ENCODE measurements at regions of chr19 and their contacts with region 1.

Region 1: GRCh38 chr19:10998045-10998533 is 37.3 kb downstream of the SMARCA4 start:
- DNase-seq: no peak
- ATAC-seq: no peak
- H3K4me3 ChIP-seq: no peak overlapping the region
- H3K4me3 Mint-ChIP-seq: no peak overlapping the region
- H3K27ac ChIP-seq: no peak overlapping the region
- H3K27ac Mint-ChIP-seq: no peak overlapping the region
- H3K4me1 ChIP-seq: no peaks in the 10 kb centered on the region
- H3K4me1 Mint-ChIP-seq: no peaks in the 10 kb centered on the region
- H3K27me3 ChIP-seq: no peaks in the 10 kb centered on the region
- H3K27me3 Mint-ChIP-seq: no peaks in the 10 kb centered on the region
- CTCF ChIP-seq: no peak

Region 2: DNA sequence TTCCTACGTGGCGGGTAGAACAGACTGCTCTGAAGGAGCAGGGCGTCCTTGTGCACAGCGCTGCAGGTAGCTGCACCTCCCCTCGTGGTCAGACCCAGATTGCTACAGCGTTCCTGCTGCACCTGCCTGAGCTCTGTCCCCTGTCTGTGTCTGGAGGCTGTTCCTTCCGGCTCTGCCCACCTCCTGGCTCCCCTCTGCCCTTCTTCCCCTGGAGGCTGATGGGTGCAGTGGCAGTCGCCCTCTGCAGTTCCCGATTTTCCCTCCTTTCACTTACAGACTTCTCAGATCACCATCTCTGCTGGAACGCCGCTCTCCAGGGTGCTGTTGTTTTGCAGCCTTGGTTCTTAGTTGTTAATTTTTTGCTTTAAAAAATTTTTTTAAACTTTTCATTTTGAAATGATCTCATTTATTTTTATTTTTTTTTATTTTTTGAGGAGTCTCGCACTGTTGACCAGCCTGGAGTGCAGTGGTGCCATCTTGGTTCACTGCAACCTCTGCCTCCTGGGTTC is 16.4 kb after region 1 on chr19:
- CTCF ChIA-PET with region 1: no interaction called
- POLR2A ChIA-PET with region 1: no interaction called
- intact Hi-C with region 1: loop called in 1 of 2 experiments (anchors 1 kb)
- DNase-seq: no peak
- ATAC-seq: no peak
- H3K4me3 ChIP-seq: no peak overlapping the region
- H3K4me3 Mint-ChIP-seq: no peak overlapping the region
- H3K27ac ChIP-seq: no peak overlapping the region
- H3K27ac Mint-ChIP-seq: no peak overlapping the region
- H3K4me1 ChIP-seq: no peaks in the 10 kb centered on the region
- H3K4me1 Mint-ChIP-seq: no peaks in the 10 kb centered on the region
- H3K27me3 ChIP-seq: no peaks in the 10 kb centered on the region
- H3K27me3 Mint-ChIP-seq: no peaks in the 10 kb centered on the region
- CTCF ChIP-seq: no peak